Tibial artery (tissue), 4 donors: ENCODE measurements at regions of chr12 and their contacts with region 1.

Region 1: DNA sequence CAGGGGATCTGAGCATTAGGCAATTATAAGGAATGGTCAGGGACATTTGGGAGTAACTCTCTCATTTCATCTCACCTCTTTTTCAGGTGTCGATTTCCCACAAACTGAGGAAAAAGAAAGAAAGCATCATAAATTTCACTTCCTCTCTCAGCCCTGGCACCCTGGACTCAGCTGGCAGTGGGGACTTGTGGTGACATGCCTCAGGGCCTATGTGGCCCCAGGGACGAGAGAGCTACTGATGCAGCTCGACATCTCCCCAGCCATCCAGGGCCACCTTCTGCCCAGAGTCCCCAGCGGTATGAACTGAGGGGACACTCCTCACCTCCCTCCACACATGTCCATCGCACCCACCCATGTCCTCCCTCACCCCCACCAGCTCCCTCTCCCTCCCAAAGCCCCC is 11.7 kb downstream of the TNFRSF1A start:
- DNase-seq: no peak
- H3K4me3 ChIP-seq: no peak overlapping the region
- H3K27ac ChIP-seq: peak overlapping the region; percentile 48 to 63
- H3K4me1 ChIP-seq: peaks cover 0 to 78% (median 54%) of the 10 kb centered on the region in 4 donors
- H3K27me3 ChIP-seq: no peaks in the 10 kb centered on the region
- CTCF ChIP-seq: no peak

Region 2: DNA sequence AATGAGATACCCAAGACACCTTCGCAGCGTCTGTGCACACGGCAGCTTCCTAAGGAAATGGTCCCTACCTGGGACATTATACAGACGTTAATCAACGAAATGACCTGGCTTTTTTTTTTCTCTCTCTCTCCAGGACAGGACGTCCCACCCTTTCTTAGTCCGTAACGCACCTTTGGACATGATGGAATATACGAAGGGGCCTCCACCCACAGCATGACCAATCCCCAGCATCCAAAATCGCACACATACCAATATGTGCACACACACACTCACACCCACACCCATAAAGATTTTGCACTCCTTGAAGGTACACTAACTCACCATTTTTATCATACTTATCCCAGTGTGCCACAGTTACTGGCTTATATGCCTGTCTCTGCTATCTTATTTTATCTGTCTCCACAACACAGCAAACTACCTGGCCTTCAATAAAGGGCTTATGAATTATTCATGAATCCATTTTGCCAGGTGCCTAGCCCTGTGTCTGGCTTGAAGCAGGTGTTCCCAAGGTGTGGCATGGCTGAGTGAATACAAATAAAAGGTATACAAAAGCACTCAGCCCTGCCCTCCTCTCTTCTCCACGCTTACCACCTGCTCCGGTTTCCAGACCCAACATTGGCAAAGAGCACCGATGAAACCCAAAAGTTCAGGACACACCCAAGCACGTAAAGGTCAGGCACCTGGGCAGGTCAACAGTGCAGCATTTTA is 43.0 kb after region 1 on chr12:
- intact Hi-C with region 1: no loop called
- DNase-seq: no peak
- H3K4me3 ChIP-seq: no peak overlapping the region
- H3K27ac ChIP-seq: peak overlapping the region; percentile 54 to 62
- H3K4me1 ChIP-seq: peaks cover 0 to 50% (median 33%) of the 10 kb centered on the region in 4 donors
- H3K27me3 ChIP-seq: no peaks in the 10 kb centered on the region
- CTCF ChIP-seq: no peak

Region 3: DNA sequence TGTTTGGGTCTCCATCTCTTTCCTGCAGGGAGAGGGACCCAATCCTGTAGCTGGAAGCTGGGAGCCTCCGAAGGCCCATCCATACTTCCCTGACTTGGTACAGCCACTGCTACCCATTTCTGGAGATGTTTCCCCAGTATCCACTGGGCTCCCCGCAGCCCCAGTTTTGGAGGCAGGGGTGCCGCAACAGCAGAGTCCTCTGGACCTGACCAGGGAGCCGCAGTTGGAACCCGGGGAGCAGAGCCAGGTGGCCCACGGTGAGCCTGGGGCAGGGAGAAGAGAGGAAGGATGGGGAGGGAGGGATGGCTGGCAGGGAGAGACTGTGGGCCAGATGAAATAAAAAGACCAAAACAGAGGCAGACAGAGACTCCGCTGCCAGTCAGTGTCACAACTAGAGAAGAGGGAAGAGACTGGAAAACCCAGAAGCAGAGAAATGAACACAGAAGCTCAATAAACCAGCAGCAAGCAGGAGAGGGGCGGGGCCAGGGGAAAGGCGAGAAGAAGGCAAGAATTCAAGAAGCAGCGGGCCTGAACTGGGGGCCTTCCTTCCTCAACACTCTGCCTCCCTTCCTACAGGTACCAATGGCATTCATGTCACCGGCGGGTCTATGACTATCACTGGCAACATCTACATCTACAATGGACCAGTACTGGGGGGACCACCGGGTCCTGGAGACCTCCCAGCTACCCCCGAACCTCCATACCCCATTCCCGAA is 60.0 kb after region 1 on chr12:
- intact Hi-C with region 1: loop called (anchors 2 kb)
- DNase-seq: no peak
- H3K4me3 ChIP-seq: no peak overlapping the region
- H3K27ac ChIP-seq: no peak overlapping the region
- H3K4me1 ChIP-seq: peaks cover 0 to 23% (median 14%) of the 10 kb centered on the region in 4 donors
- H3K27me3 ChIP-seq: no peaks in the 10 kb centered on the region
- CTCF ChIP-seq: no peak

Region 4: GRCh38 chr12:6613776-6614512 is 283.8 kb after region 1 on chr12:
- intact Hi-C with region 1: no loop called
- DNase-seq: peak; percentile 95 to 98
- H3K4me3 ChIP-seq: peak overlapping the region in 1 of 2 donors; percentile 34
- H3K27ac ChIP-seq: peak overlapping the region; percentile 92 to 98
- H3K4me1 ChIP-seq: peaks cover 0 to 36% (median 28%) of the 10 kb centered on the region in 4 donors
- H3K27me3 ChIP-seq: no peaks in the 10 kb centered on the region
- CTCF ChIP-seq: no peak